B cell (primary cell): ENCODE measurements at regions of chr16 and their contacts with region 1.

Region 1: GRCh38 chr16:57591086-57591869 is 37.2 kb upstream of the ADGRG1 start:
- DNase-seq: peak; percentile 69
- ATAC-seq: peak; percentile 86
- H3K4me3 ChIP-seq: no peak overlapping the region
- H3K4me3 Mint-ChIP-seq: no peak overlapping the region
- H3K27ac ChIP-seq: no peak overlapping the region
- H3K27ac Mint-ChIP-seq: no peak overlapping the region
- H3K4me1 ChIP-seq: peaks cover 15 to 19% of the 10 kb centered on the region in 2 donors
- H3K4me1 Mint-ChIP-seq: peaks cover 21% of the 10 kb centered on the region
- H3K27me3 ChIP-seq: peaks cover 0 to 4% (median 0%) of the 10 kb centered on the region in 4 experiments
- H3K27me3 Mint-ChIP-seq: peaks cover 25% of the 10 kb centered on the region
- CTCF ChIP-seq: peak; percentile 85

Region 2: DNA sequence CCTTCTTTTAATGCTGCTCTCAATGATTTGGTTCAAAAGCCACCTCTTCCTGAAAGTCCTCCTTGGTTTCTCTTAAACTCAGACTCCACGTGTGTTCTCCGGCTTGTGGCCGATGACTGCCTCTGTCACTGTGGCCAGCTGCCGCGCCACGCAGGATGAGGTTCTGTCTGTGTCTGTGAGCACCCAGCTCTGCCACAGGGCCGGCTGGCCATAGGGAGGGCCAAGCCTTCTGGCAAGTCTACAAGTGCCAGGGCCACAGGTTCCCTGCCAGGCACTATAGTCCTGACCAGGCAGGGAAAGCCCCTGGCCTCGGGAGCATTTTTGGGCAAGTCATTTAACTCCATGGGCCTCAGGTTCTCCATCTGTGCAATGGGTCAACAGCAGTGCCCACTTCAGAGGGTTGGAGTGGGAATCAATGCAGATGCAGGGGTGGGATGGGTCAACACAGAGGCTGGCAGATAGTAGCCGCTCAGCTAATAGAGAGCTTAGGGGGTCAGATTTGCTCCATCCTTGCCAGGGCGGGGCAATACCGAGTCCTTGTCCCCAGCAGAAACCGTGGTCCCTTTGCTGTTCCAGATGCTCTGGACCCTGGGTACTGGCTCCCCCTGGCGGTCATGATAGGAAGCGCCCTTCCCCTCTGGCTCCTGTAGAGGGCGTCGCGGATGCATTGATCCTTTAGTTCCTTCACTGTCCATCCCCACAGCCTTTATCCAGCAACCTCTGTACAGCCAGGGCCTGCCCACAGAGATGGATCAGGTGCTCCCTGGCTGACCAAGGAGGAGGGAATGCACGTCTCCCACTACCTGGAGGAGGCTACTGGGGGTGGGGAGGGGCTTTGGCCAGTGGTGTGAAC is 57.5 kb after region 1 on chr16:
- CTCF ChIA-PET with region 1: interaction called, 12 read pairs
- POLR2A ChIA-PET with region 1: no interaction called
- intact Hi-C with region 1: loop called (anchors 5 kb)
- DNase-seq: peak; percentile 83
- ATAC-seq: peak; percentile 82
- H3K4me3 ChIP-seq: no peak overlapping the region
- H3K4me3 Mint-ChIP-seq: no peak overlapping the region
- H3K27ac ChIP-seq: peak overlapping the region; percentile 36 to 61
- H3K27ac Mint-ChIP-seq: peak overlapping the region; percentile 53
- H3K4me1 ChIP-seq: peaks cover 23 to 27% of the 10 kb centered on the region in 2 donors
- H3K4me1 Mint-ChIP-seq: peaks cover 32% of the 10 kb centered on the region
- H3K27me3 ChIP-seq: peaks cover 0 to 3% (median 0%) of the 10 kb centered on the region in 4 experiments
- H3K27me3 Mint-ChIP-seq: no peaks in the 10 kb centered on the region
- CTCF ChIP-seq: peak; percentile 99